Right ventricle myocardium inferior (tissue), 1 donor: ENCODE measurements at regions of chr14 and their contacts with region 1.

Region 1: DNA sequence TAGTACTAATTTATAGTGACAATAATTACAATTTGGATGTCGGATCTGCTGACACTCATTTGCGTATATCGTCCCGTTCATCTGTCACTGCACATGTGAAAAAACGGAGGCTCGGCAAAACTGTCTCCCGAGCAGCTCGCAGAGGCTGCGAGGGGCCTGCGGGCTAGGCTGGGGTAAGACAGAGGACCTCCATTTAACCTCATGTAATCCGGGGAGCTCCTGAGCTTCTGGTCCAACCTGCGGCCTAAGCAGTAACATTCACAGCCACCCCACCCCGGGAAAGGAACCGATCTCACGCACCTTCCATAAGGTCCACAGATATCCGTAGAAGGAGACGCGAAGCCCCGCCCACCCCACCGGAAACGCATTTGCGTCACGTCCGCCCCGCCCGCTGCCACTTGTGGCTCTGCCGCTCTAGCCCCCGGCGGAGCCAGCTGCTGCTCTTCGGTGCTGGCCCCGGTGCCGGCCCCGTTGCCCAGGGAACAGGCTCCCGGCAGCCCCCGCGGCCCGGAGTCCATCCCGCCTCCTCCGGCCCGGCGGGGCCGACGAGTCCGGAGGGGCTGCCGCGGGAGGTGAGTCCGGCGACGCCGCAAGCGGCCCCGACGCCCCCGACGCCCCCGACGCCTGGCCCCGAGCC is at the starts of genes CINP and TECPR2:
- DNase-seq: peak; percentile 98
- ATAC-seq: peak; percentile 99
- total RNA-seq, gene CINP: 31.1 TPM
- total RNA-seq, gene TECPR2: 19.4 TPM

Region 2: DNA sequence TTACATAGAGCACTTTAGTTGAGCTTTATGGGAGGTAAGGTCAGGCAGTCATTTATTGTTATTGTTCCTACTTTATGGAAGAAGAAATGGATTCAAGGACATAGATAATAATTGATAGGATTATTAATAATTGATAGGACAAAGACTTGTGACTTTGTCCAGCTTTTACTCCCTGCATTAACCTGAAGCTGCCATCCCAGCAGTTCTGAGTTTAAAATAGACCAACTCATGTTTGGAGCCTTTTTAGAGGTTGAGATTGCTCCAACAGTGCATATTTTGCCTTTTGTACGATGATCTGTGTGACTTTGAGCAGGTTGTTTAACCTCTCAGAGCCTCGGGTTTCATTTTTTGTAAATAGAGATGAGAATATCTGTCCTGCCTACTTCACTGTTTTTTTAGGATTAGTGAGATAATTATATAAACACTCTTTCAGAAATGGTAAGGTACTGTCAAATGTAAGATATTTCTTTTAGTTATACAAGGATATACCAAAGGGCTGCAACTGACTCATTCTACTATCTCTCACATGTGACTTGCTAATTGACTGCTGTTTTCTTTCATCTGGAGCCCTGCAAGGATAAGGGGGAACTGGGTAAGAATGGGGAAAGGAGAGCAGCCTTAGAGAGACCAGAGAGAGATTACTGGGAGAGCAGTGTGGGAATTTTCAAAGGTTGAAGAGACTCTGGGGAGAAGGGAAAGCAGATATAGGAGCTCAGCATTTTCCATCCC is 207.7 kb before region 1 on chr14:
- intact Hi-C with region 1: no loop called
- DNase-seq: no peak
- ATAC-seq: no peak

Region 3: GRCh38 chr14:102408724-102409123 is 46.1 kb after region 1 on chr14:
- intact Hi-C with region 1: loop called (anchors 2 kb)
- DNase-seq: no peak
- ATAC-seq: peak; percentile 57

Region 4: DNA sequence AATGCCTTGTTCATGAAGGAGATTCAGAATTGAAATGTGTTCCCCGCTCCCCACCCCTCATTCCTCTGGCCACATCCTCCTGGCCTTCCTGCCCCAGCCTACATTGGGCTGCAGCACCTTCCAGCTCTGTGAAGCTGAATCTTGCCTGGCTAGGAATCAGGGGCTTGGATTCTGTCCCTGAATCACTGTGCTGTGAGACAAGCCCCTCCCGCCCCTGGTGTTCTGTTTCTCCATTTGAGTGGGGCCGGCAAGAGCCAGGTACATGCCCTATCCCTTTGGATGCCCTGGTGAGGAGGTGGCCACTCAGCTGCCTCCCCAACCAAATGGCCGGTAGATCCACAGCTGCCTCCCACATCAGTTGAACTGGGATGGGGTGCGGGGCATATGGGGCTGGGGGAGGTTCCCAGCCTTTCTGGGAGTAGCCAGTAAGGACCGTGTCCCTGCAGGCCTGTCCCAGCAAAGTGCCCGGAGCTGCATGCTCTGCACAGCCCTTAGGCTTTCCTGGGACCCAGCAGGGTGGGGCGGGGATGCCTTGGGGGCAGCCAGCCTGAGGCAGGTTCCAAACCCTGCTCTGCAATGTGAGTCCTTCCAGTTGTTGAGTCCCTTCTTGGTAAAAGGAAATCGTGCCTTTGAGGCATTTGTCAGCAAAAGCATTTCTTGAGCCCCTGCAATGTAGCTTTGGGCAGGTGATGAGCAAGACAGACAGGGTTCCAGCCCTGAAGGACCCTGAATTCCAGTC is 376.3 kb after region 1 on chr14:
- intact Hi-C with region 1: no loop called
- DNase-seq: no peak
- ATAC-seq: no peak